ENCODE measurements at regions of chr18 and their contacts with region 1.

Region 1: DNA sequence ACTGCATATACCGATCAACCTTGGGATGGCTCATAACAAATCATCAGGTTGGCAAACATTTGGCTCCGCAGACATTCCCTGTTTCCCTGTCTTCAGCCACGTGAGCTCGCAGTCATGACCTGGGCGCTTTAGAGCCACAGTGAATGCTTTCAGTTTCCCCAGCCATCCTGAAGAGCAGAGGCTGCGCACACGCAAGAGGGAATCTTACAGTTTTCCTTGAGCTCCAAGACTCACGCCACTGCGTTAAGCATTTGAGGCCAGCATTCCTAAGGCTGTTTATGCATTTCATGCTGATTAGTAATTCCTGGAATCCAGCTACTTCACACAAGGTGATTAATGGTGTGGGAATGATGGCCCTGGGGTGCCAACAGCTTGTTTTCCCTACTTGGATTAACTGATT is 95.1 kb downstream of the MTCL1 start:
- DNase-seq: peak; percentile 98
- ATAC-seq: peak; percentile 61
- H3K4me3 ChIP-seq: peak overlapping the region; percentile 24; the same call in 1 of the 2 replicates
- H3K27ac ChIP-seq: peak overlapping the region; percentile 95
- H3K4me1 ChIP-seq: peaks cover 68% of the 10 kb centered on the region
- H3K27me3 ChIP-seq: no peaks in the 10 kb centered on the region
- CTCF ChIP-seq: no peak

Region 2: GRCh38 chr18:8704361-8705279 is 95.8 kb before region 1 on chr18:
- CTCF ChIA-PET with region 1: interaction called, 9 read pairs
- POLR2A ChIA-PET with region 1: interaction called, 3 read pairs
- intact Hi-C with region 1: loop called (anchors 1 kb)
- DNase-seq: peak; percentile 90
- ATAC-seq: peak; percentile 68
- H3K4me3 ChIP-seq: peak overlapping the region; percentile 75
- H3K27ac ChIP-seq: peak overlapping the region; percentile 51
- H3K4me1 ChIP-seq: peaks cover 49% of the 10 kb centered on the region
- H3K27me3 ChIP-seq: no peaks in the 10 kb centered on the region
- CTCF ChIP-seq: no peak

Region 3: GRCh38 chr18:8871489-8871888 is 71.0 kb after region 1 on chr18:
- CTCF ChIA-PET with region 1: no interaction called
- POLR2A ChIA-PET with region 1: interaction called, 13 read pairs
- intact Hi-C with region 1: no loop called
- DNase-seq: peak; percentile 70
- ATAC-seq: peak; percentile 42
- H3K4me3 ChIP-seq: no peak overlapping the region
- H3K27ac ChIP-seq: no peak overlapping the region
- H3K4me1 ChIP-seq: peaks cover 6% of the 10 kb centered on the region; the same call in 1 of the 2 replicates
- H3K27me3 ChIP-seq: no peaks in the 10 kb centered on the region
- CTCF ChIP-seq: no peak

Region 4: DNA sequence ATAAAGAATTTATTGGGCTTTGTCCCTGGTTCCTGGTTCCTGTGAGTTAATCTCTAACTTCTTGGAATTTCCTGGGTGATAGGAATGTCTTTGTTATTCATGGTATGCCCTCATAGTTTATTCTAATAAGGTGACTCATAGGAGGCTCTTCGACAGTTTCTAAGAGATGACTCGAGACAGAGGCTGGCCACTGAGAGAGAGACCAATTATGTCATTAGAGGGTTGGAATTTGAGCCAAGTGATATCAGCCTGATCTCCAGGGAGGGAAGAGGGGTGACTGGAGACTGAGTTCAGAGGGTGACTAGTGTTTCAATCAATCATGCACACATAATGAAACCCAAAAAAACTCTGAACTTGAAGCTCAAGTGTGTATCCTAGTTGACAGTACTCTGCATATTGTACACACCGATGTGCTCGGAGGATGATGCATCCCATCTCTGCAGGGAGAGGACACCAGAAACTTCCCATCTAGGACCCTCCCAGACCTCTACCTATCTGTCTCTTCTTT is 90.6 kb after region 1 on chr18:
- CTCF ChIA-PET with region 1: no interaction called
- POLR2A ChIA-PET with region 1: no interaction called
- intact Hi-C with region 1: loop called (anchors 1 kb)
- DNase-seq: peak; percentile 99
- ATAC-seq: peak; percentile 99
- H3K4me3 ChIP-seq: peak overlapping the region; percentile 4; the same call in 1 of the 2 replicates
- H3K27ac ChIP-seq: peak overlapping the region; percentile 78
- H3K4me1 ChIP-seq: peaks cover 28% of the 10 kb centered on the region
- H3K27me3 ChIP-seq: no peaks in the 10 kb centered on the region
- CTCF ChIP-seq: no peak

Region 5: DNA sequence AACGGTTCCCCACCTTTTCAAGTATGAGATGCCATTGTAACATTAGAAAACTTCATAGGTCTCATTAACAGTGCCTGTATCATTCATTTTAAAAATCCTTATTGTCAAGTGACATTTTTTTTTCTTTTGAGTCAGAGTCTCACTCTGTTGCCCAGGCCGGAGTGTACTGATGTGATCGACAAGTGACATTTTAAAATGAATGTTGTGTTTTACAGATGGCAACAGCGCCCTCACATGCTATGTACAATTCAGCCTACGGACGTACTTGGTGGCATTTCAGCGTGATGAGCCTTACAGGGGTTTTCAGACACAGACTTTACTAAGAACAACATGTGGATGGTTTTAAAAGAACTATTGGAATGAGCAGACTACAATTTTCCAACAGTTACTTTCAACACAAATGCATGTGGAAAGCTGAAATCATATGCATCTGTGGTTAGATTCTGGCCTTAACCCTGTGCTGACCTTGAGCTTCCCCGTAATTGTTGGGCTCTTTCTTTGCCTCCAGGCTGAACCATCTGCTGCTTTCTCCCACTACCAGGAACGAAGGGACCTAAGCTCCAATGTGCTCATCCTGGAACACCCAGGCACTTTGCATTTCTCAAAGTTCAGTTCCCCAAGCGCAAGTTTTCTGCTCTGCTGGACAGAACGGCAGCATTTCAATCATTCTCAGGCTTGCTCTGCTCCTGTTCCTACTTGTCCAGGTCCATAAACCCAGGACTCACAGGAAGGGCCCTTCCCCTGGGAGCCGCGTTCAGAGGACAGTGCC is 182.2 kb after region 1 on chr18:
- CTCF ChIA-PET with region 1: interaction called, 5 read pairs
- POLR2A ChIA-PET with region 1: no interaction called
- intact Hi-C with region 1: loop called (anchors 5 kb)
- DNase-seq: peak; percentile 86
- ATAC-seq: peak; percentile 97
- H3K4me3 ChIP-seq: no peak overlapping the region
- H3K27ac ChIP-seq: no peak overlapping the region
- H3K4me1 ChIP-seq: no peaks in the 10 kb centered on the region
- H3K27me3 ChIP-seq: no peaks in the 10 kb centered on the region
- CTCF ChIP-seq: peak; percentile 89